Kidney (tissue), 22 donors: ENCODE measurements at regions of chr9 and their contacts with region 1.

Region 1: DNA sequence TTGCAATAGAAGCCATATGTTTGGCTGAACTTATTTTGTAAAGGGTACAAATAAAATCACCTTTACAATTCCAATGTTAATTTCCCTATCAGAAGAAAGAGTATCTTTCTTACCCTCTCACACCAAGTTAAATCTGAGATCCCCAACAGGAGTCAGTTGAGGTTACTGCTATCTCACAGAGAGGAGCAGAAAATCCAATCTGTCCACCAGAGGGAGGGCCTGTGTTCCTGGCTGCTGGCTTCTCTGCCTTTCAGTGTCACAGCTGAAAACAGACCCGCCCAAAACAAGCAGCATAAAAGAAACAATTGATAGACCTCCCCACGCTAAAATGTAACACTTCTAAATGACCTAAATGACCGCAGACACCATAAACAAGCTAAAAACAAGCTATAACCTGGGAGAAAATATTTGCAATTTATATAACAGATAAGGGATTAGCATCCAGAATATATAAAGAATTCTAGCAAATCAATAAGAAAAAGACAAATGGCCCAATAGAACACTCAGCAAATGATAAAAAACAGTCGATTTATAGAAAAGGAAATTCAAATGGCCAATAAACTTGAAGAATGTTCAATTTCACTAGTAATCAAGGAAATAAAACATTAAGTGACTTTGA is 24.5 kb upstream of the MVB12B start:
- DNase-seq: peak in 3 of 5 donors; percentile 64 to 77 (median 67)
- H3K4me3 ChIP-seq: no peak overlapping the region
- H3K27ac ChIP-seq: no peak overlapping the region
- H3K4me1 ChIP-seq: no peaks in the 10 kb centered on the region
- H3K27me3 ChIP-seq: no peaks in the 10 kb centered on the region
- CTCF ChIP-seq: peak; percentile 39

Region 2: GRCh38 chr9:125726456-125727132 is 575.5 kb before region 1 on chr9:
- intact Hi-C with region 1: no loop called
- DNase-seq: no peak
- H3K4me3 ChIP-seq: no peak overlapping the region
- H3K27ac ChIP-seq: no peak overlapping the region
- H3K4me1 ChIP-seq: no peaks in the 10 kb centered on the region
- H3K27me3 ChIP-seq: no peaks in the 10 kb centered on the region
- CTCF ChIP-seq: no peak

Region 3: GRCh38 chr9:126398403-126399058 is 96.4 kb after region 1 on chr9:
- intact Hi-C with region 1: loop called (anchors 10 kb)
- DNase-seq: peak; percentile 77 to 90 (median 82)
- H3K4me3 ChIP-seq: no peak overlapping the region
- H3K27ac ChIP-seq: no peak overlapping the region
- H3K4me1 ChIP-seq: no peaks in the 10 kb centered on the region
- H3K27me3 ChIP-seq: no peaks in the 10 kb centered on the region
- CTCF ChIP-seq: peak; percentile 98